T-cell (primary cell): ENCODE measurements at regions of chr13 and their contacts with region 1.

Region 1: DNA sequence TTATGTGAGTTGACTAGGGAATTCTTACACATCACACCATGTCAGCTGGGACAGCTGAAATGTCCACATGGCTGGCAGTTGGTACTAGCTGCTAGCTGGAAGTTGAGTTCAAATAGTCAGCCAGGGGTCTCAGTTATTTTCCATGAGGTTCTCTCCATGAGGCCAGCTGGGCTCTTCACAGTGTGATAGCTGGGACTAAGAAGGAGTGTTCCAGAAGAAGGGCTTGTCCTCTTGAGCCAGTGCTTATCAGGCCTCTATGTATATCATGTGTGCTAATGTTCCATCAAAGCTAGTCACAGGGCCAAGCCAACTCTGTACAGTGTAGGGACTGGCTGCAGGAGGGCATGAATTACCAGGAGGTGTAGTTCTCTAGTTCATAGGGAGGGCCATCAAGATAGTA is 11.8 kb downstream of the USPL1 start:
- DNase-seq: no peak
- ATAC-seq: no peak
- H3K4me3 ChIP-seq: no peak overlapping the region
- H3K4me3 Mint-ChIP-seq: no peak overlapping the region
- H3K27ac ChIP-seq: no peak overlapping the region
- H3K27ac Mint-ChIP-seq: no peak overlapping the region
- H3K4me1 ChIP-seq: peaks cover 2 to 16% of the 10 kb centered on the region in 2 experiments
- H3K4me1 Mint-ChIP-seq: peaks cover 58% of the 10 kb centered on the region in 3 donors
- H3K27me3 ChIP-seq: no peaks in the 10 kb centered on the region
- H3K27me3 Mint-ChIP-seq: no peaks in the 10 kb centered on the region

Region 2: GRCh38 chr13:30647824-30648521 is 18.4 kb after region 1 on chr13:
- CTCF ChIA-PET with region 1: interaction called, 3 read pairs
- POLR2A ChIA-PET with region 1: interaction called in 1 of 2 experiments, 15 read pairs
- DNase-seq: no peak
- ATAC-seq: no peak
- H3K4me3 ChIP-seq: no peak overlapping the region
- H3K4me3 Mint-ChIP-seq: no peak overlapping the region
- H3K27ac ChIP-seq: no peak overlapping the region
- H3K27ac Mint-ChIP-seq: no peak overlapping the region
- H3K4me1 ChIP-seq: peaks cover 0 to 2% of the 10 kb centered on the region in 2 experiments
- H3K4me1 Mint-ChIP-seq: peaks cover 32 to 36% (median 35%) of the 10 kb centered on the region in 3 donors
- H3K27me3 ChIP-seq: no peaks in the 10 kb centered on the region
- H3K27me3 Mint-ChIP-seq: no peaks in the 10 kb centered on the region

Region 3: DNA sequence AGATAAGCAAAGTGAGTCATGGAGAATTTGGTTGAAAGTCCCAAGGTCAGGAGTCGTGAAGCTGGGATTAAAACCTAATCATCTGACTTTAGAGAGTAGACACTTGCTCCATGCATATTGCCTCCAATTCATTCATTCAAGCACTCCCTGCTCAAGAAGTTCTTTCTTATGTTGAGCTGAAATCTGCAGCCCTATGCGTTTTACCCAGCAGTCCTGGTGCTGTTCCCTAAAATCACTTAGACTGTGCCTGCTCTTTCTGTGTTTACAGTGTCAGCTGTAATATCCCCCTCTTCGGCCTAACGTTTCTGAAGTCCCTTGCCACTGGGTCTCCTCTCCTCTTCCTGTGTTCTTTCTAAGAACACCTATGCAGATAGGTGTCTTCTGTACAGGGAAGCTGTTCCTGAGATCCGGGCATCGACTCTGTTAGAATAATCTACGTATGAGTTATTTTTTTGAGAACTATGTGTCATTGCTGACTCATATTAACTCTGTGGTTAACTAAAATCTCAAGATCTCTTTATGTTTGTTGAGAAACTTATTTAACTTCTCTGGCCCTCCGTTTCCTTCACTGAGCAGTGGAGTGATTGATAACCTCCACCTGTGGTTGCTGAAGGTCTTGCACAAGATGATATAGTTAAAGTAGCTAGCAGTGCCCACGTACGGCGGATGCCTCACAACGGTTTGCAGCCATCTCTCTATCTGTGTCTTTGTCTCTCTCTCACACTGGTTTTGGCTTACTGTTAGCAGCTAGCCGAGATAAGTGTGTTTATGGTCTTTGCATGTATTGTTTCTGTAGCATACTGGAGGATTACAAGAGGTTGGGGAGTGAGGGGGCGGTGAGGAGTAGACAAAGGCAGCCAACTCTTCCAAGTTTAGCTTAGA is 110.5 kb after region 1 on chr13:
- CTCF ChIA-PET with region 1: no interaction called
- POLR2A ChIA-PET with region 1: no interaction called
- DNase-seq: peak; percentile 14 to 80 (median 46)
- ATAC-seq: peak; percentile 60 to 71 (median 68)
- H3K4me3 ChIP-seq: peak overlapping the region in 1 of 2 donors; percentile 28
- H3K4me3 Mint-ChIP-seq: peak overlapping the region; percentile 72 to 78 (median 78)
- H3K27ac ChIP-seq: peak overlapping the region; percentile 66
- H3K27ac Mint-ChIP-seq: peak overlapping the region; percentile 88 to 98
- H3K4me1 ChIP-seq: peaks cover 28 to 83% of the 10 kb centered on the region in 2 experiments
- H3K4me1 Mint-ChIP-seq: peaks cover 80 to 87% (median 82%) of the 10 kb centered on the region in 3 donors
- H3K27me3 ChIP-seq: no peaks in the 10 kb centered on the region
- H3K27me3 Mint-ChIP-seq: no peaks in the 10 kb centered on the region